Activated CD4-positive, alpha-beta memory T cell treated with anti-CD3 and anti-CD28 coated beads, Interleukin-2, amount 10 ng/mL, durations not matched to agents 7 days and 5 days (primary cell): ENCODE measurements at regions of chr7 and their contacts with region 1.

Region 1: GRCh38 chr7:132318352-132319318 is 257.6 kb downstream of the PLXNA4 start:
- DNase-seq: peak; percentile 83
- H3K4me3 Mint-ChIP-seq: no peak overlapping the region
- H3K27ac Mint-ChIP-seq: no peak overlapping the region
- H3K4me1 Mint-ChIP-seq: peaks cover 22% of the 10 kb centered on the region
- H3K27me3 Mint-ChIP-seq: peaks cover 49% of the 10 kb centered on the region

Region 2: DNA sequence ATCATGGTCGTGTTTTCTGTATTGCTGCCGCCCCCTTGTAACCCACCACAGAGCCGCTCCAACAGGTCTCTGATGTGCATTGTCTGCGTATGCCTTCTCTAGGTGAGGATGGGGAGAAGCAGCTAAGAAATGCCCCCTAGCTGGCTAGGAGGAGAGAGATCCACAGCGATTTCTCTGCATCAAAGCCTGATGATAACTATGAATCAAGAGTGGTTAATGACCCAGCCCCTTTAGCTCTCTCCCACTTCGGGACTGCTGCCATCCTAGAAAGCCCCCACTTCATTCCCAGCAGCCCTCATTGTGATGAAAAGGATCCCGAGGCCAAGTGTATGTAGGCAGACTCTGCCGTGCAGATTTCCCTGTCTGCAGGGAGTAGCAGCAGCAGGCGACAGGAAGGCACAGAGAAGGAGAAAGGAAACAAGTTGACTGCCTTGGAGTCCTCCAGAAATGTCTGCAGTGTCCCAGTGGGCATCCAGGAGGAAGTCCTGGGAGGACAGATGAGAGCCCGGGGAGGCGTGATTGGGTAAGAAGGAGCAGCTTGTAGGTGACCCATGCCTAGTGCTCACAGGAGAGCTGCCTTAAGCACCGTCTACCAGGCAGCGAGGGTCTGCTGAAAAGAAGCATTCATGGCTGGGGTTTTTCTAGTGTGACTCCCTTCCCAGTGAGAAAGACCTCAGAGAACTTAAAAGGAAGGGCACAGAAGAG is 254.8 kb after region 1 on chr7:
- CTCF ChIA-PET with region 1: interaction called, 136 read pairs
- POLR2A ChIA-PET with region 1: no interaction called
- DNase-seq: no peak
- H3K4me3 Mint-ChIP-seq: no peak overlapping the region
- H3K27ac Mint-ChIP-seq: no peak overlapping the region
- H3K4me1 Mint-ChIP-seq: peaks cover 15% of the 10 kb centered on the region
- H3K27me3 Mint-ChIP-seq: peaks cover 79% of the 10 kb centered on the region

Region 3: DNA sequence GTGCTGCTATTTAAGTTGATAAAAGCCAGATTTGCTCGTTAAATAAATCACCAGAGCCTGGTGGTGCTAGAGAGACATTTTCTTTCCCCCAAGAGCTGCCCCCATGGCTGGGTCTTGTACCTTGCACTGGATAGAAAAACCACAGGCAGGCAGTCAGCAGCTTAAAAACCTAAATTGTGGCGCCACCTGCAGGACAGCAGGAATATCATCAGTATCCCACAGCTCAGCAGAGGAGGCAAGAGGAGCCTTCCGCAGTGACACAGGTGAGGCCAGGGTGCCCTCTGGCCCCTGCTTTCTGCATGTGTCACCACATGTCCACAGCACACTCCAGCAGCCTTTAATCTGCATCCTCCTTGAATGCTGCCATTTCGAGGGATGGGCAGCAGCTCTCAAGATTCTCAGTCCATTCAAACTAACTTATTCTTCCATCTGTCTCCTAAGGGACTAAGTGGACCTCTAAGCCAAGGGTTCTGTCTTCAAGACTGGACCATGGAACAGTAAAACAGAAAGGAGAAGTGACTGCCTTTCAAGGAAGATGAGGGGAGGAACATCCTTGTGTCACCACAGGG is 262.2 kb after region 1 on chr7:
- CTCF ChIA-PET with region 1: interaction called, 136 read pairs
- POLR2A ChIA-PET with region 1: interaction called, 8 read pairs
- DNase-seq: peak; percentile 77
- H3K4me3 Mint-ChIP-seq: no peak overlapping the region
- H3K27ac Mint-ChIP-seq: no peak overlapping the region
- H3K4me1 Mint-ChIP-seq: peaks cover 9% of the 10 kb centered on the region
- H3K27me3 Mint-ChIP-seq: peaks cover 36% of the 10 kb centered on the region